ENCODE measurements at regions of chr19 and their contacts with region 1.

Region 1: DNA sequence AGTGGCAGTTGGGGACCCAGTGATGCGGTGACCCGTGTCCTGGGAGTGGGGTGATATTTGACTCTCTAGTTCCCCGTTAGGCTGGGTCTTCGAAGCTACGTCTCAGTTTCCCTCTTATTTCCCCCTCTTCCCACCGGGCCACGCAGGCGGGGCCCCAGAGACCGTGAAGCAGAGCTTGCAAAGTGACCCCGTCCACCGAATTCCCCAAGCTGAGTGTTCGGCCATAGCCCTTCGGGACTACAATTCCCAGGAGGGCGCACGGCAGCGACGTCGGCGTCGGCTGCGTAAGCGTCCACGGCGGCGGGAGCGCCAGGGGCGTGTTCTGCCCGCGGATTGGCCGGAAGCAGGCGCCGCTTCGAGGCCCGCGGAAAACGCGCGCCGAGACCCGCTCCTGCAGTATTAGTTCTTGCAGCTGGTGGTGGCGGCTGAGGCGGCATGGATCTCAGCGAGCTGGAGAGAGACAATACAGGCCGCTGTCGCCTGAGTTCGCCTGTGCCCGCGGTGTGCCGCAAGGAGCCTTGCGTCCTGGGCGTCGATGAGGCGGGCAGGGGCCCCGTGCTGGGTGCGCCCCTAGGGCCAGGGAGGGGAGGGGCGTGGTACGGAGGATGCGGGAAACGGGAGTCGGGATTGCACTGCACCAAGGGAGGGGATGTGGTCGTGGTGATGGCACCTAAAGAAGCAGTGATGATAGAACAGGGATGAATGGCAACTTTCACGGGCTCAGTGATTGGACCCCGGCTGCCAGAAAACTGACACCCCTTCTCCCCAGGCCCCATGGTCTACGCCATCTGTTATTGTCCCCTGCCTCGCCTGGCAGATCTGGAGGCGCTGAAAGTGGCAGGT is at the start of gene RNASEH2A:
- DNase-seq: peak; percentile 91 to 95
- ATAC-seq: peak; percentile 85 to 92 (median 86)
- H3K4me3 ChIP-seq: peak within 1 kb of the TSS; percentile 81
- H3K27ac ChIP-seq: peak within 1 kb of the TSS; percentile 65
- H3K4me1 ChIP-seq: peaks cover 20% of the 10 kb centered on the region
- H3K27me3 ChIP-seq: no peaks in the 10 kb centered on the region
- CTCF ChIP-seq: no peak
- total RNA-seq, gene RNASEH2A: 2.4 to 5.0 (median 3.0) TPM

Region 2: DNA sequence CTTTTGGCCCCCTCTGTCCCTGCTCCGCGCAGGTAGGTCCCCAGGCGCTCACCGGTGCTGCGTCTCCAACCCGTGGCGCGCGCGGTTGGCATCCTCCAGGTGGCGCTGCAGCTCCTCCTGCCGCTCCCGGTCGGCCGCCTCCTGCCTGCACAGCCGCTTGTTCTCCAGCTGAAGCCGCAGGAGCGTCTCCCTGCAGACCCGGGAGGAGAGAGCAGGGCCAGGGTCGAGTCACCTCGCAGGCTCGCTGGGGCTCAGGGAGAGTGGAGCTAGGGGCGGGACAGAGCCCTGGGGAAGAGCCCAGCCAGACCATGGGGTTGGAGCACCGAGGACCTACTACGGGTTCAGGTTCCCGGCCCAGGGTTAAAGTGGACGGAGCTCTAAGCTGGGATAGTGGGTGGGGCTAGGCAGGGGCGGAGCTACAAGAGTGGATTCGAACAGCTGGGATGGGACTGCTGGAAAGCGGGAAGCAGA is 40.4 kb before region 1 on chr19:
- intact Hi-C with region 1: loop called in 1 of 2 experiments (anchors 5 kb)
- DNase-seq: peak; percentile 76 to 89
- ATAC-seq: peak; percentile 71 to 86 (median 82)
- H3K4me3 ChIP-seq: peak overlapping the region; percentile 52
- H3K27ac ChIP-seq: peak overlapping the region; percentile 46
- H3K4me1 ChIP-seq: no peaks in the 10 kb centered on the region
- H3K27me3 ChIP-seq: no peaks in the 10 kb centered on the region
- CTCF ChIP-seq: peak; percentile 75

Region 3: GRCh38 chr19:12825254-12826131 is 19.0 kb after region 1 on chr19:
- intact Hi-C with region 1: no loop called
- DNase-seq: no peak
- ATAC-seq: no peak
- H3K4me3 ChIP-seq: no peak overlapping the region
- H3K27ac ChIP-seq: no peak overlapping the region
- H3K4me1 ChIP-seq: no peaks in the 10 kb centered on the region
- H3K27me3 ChIP-seq: peaks cover 0 to 62% (median 10%) of the 10 kb centered on the region in 3 donors
- CTCF ChIP-seq: peak; percentile 18

Region 4: DNA sequence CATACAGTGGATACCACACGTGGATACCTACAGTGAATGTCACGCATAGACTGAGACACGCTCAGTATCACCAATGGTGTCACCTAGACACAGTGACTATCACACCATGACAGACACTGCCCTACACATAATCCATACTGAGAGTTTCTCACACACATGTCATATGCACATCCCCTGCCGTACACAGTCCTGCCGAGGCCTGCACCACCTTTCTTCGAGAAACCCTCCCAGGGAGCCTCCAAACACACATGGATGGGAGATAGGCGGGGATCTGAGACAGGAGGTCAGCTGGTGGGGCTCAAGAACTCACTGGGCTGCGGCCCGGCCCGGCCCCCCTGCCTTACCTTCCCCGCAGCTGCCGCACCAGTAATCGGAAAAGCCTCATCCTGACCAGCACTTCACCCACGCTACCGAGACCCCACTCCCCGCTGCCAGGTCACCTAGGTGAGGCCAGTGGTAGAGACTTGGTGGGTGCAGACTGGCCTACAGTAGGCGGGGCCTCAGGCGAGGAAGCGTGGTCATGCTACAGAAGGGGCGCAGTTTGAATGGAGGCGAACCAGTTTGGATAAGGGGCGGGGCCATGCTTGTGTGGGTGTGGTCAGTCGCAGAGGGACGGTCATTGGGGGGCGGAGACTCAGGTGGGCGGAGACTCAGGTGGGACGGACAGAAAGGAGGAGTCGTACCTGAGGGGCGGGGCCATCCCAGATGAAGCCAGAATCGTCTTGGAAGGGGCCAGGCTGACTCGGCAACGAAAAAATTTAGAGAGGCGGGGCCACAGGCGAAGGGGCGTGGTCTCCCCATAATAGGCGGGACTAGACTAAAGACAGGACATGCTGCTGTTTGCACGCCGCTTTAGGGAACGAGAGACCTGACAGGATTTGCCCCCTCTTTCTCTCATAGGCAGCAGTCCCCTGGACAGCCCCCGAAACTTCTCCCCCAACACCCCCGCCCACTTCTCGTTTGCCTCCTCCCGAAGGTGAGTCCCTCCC is 33.9 kb after region 1 on chr19:
- intact Hi-C with region 1: loop called in 1 of 2 experiments (anchors 5 kb)
- DNase-seq: peak; percentile 51 to 73
- ATAC-seq: peak; percentile 70 to 75 (median 72)
- H3K4me3 ChIP-seq: peak overlapping the region; percentile 42
- H3K27ac ChIP-seq: no peak overlapping the region
- H3K4me1 ChIP-seq: peaks cover 6% of the 10 kb centered on the region
- H3K27me3 ChIP-seq: peaks cover 0 to 88% (median 37%) of the 10 kb centered on the region in 3 donors
- CTCF ChIP-seq: no peak

Region 5: DNA sequence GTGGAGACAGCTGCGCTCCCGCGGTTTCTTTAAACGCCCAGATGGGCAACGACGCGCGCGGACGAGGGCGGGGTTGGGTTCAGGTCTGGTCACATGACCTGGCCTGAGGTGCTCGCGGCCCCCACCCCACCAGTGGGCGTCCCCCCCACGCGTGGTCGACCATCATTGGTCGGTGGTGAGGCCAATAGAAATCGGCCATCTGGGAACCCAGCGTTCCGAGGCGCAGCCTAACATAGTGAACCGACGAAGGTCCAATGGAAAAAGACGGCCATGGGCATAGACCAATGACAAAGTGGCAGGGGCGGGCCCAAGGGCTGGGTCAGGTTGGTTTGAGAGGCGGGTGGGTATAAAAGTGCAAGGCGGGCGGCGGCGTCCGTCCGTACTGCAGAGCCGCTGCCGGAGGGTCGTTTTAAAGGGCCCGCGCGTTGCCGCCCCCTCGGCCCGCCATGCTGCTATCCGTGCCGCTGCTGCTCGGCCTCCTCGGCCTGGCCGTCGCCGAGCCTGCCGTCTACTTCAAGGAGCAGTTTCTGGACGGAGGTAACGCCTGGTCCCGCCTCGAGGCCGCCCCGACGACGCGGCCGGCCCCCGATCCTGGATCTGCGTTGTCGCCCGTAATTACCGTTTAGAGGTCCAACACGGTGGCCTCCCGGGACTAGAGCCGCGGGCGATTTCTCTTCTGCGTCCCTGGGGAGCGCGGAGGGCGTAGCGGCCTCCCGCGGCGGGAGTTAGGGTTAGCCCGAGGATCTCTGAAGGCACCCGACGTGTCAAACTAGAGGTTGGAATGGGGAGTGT is 132.0 kb after region 1 on chr19 and contains the start of gene CALR:
- intact Hi-C with region 1: loop called in 1 of 2 experiments (anchors 10 kb)
- DNase-seq: peak; percentile 100
- ATAC-seq: peak; percentile 91 to 94 (median 92)
- H3K4me3 ChIP-seq: peak within 1 kb of the TSS; percentile 98
- H3K27ac ChIP-seq: peak within 1 kb of the TSS; percentile 98
- H3K4me1 ChIP-seq: peaks cover 23% of the 10 kb centered on the region
- H3K27me3 ChIP-seq: no peaks in the 10 kb centered on the region
- CTCF ChIP-seq: peak; percentile 25
- total RNA-seq, gene CALR: 124 to 219 (median 175) TPM